Activated CD4-positive, alpha-beta T cell treated with anti-CD3 and anti-CD28 coated beads for 36 hours (primary cell): ENCODE measurements at regions of chr1 and their contacts with region 1.

Region 1: DNA sequence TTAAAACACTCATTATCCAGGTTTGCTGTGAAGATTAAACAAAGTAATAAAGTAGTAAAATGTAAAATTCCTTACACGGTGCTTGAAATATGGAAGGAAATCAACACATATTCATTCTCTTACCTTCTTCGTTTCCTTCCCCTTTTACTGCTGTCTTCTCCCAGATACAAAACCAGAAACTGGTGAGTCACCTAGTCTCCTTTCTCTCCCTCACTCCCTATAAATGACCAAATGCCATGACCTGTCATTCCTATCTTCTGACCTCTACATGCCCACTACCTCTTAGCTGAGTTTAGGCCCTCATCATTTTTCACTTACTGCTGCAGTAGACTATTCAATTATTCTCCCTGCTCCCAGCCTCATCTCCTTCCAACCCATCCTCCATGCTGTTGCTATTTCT is 4.3 kb upstream of the NR1I3 start:
- DNase-seq: no peak
- ATAC-seq: no peak
- H3K4me3 Mint-ChIP-seq: no peak overlapping the region
- H3K27ac Mint-ChIP-seq: no peak overlapping the region
- H3K4me1 Mint-ChIP-seq: no peaks in the 10 kb centered on the region
- H3K27me3 Mint-ChIP-seq: peaks cover 7% of the 10 kb centered on the region

Region 2: DNA sequence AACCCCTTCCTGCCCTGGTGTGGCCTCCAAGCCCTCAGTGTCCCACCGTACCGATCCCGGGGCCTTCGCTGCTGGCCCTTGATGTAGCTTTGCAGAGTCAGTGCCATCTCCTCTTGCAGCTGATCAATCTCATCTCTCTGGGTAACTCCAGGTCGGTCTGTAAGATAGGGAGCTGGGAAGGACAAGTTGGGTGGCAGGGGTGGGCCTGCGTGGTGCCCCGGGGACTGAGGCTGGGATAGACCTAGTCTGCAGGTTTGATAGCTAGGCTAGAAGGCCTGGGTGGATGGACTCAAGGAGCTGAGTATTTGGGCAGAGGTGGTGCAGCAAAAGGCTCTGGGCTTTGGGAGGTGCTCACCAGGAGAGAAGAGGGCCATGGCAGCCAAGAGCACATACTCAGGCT is 11.6 kb before region 1 on chr1:
- CTCF ChIA-PET with region 1: interaction called, 12 read pairs
- POLR2A ChIA-PET with region 1: no interaction called
- intact Hi-C with region 1: no loop called
- DNase-seq: no peak
- ATAC-seq: no peak
- H3K4me3 Mint-ChIP-seq: no peak overlapping the region
- H3K27ac Mint-ChIP-seq: no peak overlapping the region
- H3K4me1 Mint-ChIP-seq: peaks cover 19% of the 10 kb centered on the region
- H3K27me3 Mint-ChIP-seq: no peaks in the 10 kb centered on the region